ENCODE measurements at regions of chr5 and their contacts with region 1.

Region 1: GRCh38 chr5:81097713-81098112 is 135.4 kb upstream of the CKMT2 start:
- DNase-seq: no peak
- H3K4me3 ChIP-seq: no peak overlapping the region
- CTCF ChIP-seq: no peak
- POLR2A ChIP-seq: no peak

Region 2: GRCh38 chr5:81068063-81068462 is 29.6 kb before region 1 on chr5:
- intact Hi-C with region 1: loop called (anchors 1 kb)
- DNase-seq: no peak
- H3K4me3 ChIP-seq: no peak overlapping the region
- CTCF ChIP-seq: no peak
- POLR2A ChIP-seq: no peak

Region 3: GRCh38 chr5:82620957-82621600 is 1523.4 kb after region 1 on chr5:
- intact Hi-C with region 1: no loop called
- DNase-seq: no peak
- H3K4me3 ChIP-seq: no peak overlapping the region
- CTCF ChIP-seq: no peak
- POLR2A ChIP-seq: no peak